ENCODE measurements at regions of chr14 and their contacts with region 1.

Region 1: DNA sequence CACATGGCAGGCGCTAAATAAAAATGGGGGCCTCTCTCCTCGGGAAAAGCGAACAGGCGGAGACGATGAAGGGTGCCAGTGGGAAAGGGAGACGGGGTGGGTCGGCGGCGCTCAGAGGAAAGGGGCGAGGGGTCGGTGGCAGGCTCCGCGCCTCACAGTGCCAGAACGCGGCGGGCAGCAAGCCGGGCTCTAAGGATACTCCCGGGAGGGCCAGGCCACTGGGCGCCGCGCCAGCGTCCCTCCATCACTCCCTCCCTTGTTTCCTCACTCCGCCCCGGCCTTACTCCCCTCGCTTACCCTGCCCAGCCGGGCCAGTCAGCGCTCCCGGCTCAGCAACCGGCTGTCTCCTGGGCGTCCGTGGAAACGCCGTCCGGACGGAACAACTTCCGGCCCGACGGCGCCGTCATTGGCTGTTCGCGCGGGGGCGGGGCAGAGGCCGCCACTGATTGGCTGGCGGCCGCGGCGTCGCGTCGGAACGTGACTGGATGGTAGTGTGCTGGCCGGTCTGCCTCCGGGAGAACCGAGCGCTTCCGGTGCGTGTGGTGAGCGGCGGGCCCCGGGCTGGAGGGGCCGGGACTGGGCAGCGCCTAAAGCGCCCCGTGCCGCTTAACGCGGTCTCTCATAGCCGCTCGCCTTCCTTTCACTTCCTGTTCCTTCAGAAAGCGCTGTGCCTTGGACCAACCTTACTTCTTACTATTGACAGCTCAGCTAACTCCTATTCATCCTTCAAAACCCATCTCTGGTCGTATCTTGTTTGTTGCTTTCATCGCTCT is 53.0 kb downstream of the SLC25A47 start:
- DNase-seq: peak; percentile 89 to 98 (median 96)
- ATAC-seq: peak; percentile 89 to 96 (median 94)
- H3K4me3 ChIP-seq: peak within 1 kb of the TSS; percentile 82 to 90 (median 84)
- H3K27ac ChIP-seq: peak within 1 kb of the TSS; percentile 63 to 89 (median 72)
- H3K4me1 ChIP-seq: peaks cover 0 to 25% (median 5%) of the 10 kb centered on the region in 3 donors
- H3K27me3 ChIP-seq: no peaks in the 10 kb centered on the region
- CTCF ChIP-seq: no peak

Region 2: GRCh38 chr14:100271247-100271939 is 104.8 kb before region 1 on chr14:
- intact Hi-C with region 1: loop called in 1 of 3 experiments (anchors 5 kb)
- DNase-seq: peak in 4 of 6 donors; percentile 58 to 80 (median 69)
- ATAC-seq: peak; percentile 90 to 95 (median 94)
- H3K4me3 ChIP-seq: no peak overlapping the region
- H3K27ac ChIP-seq: peak overlapping the region in 1 of 4 donors; percentile 4
- H3K4me1 ChIP-seq: peaks cover 5 to 11% (median 10%) of the 10 kb centered on the region in 3 donors
- H3K27me3 ChIP-seq: no peaks in the 10 kb centered on the region
- CTCF ChIP-seq: peak; percentile 12 to 52 (median 33)

Region 3: GRCh38 chr14:100285021-100285912 is 90.9 kb before region 1 on chr14:
- intact Hi-C with region 1: loop called in 1 of 3 experiments (anchors 10 kb)
- DNase-seq: peak; percentile 59 to 95 (median 79)
- ATAC-seq: peak; percentile 93 to 96 (median 96)
- H3K4me3 ChIP-seq: peak overlapping the region; percentile 41 to 87 (median 60)
- H3K27ac ChIP-seq: peak overlapping the region; percentile 57 to 89 (median 78)
- H3K4me1 ChIP-seq: no peaks in the 10 kb centered on the region
- H3K27me3 ChIP-seq: no peaks in the 10 kb centered on the region
- CTCF ChIP-seq: peak; percentile 55 to 68 (median 61)

Measured in pancreas (tissue), 10 donors.